ENCODE measurements at regions of chr21 and their contacts with region 1.

Region 1: DNA sequence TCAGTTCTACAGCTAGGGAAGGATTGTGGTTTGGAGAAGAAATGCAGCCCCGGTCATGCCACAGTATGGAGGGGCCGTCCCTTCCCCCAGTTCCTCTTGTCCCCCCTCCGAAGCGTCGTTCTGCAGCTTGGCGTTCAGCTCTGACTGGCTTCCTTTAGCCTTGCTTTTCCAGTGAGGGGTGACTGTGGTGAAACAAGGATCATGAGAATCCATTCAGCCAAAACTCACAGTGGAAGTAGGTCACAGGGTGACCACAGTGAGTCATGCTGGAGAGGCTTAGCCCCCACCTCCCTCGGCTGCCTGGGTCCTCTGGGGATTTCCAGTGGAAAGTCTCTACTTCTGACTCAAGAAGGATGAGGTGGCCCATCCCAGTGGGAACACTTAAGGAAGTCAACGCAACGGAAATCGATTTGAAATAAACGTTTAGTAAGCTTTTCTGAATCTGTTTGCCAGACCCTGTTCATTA is 37.3 kb upstream of the COL6A2 start:
- DNase-seq: peak; percentile 70 to 96
- H3K4me3 ChIP-seq: no peak overlapping the region
- H3K27ac ChIP-seq: peak overlapping the region; percentile 94 to 99
- H3K4me1 ChIP-seq: peaks cover 29 to 45% of the 10 kb centered on the region in 2 donors
- H3K27me3 ChIP-seq: no peaks in the 10 kb centered on the region
- CTCF ChIP-seq: no peak

Region 2: GRCh38 chr21:44742418-44743153 is 1318.0 kb before region 1 on chr21:
- intact Hi-C with region 1: no loop called
- DNase-seq: no peak
- H3K4me3 ChIP-seq: no peak overlapping the region
- H3K27ac ChIP-seq: no peak overlapping the region
- H3K4me1 ChIP-seq: no peaks in the 10 kb centered on the region
- H3K27me3 ChIP-seq: no peaks in the 10 kb centered on the region
- CTCF ChIP-seq: no peak

Region 3: DNA sequence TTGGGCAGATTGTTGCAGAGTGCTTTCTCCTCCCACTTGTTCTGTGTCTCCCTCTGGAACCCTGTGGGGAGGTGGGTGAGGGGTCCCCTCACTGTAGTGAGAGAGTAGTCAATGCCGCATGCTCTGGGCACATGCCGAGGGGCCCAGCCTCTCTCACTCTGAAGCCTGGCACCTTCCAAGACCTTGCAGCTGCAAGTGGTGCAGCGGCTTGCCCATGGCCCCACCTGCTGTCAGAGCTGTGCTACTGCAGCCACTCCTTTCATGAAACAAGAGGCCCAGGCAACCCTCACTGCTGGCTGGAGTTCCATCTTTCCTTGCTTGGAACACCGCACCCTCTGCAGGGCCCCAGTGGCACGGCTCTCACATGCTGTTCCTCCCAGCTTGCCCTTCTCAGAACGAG is 137.5 kb before region 1 on chr21:
- intact Hi-C with region 1: no loop called
- DNase-seq: peak in 1 of 2 donors; percentile 80
- H3K4me3 ChIP-seq: no peak overlapping the region
- H3K27ac ChIP-seq: no peak overlapping the region
- H3K4me1 ChIP-seq: peaks cover 0 to 3% of the 10 kb centered on the region in 2 donors
- H3K27me3 ChIP-seq: no peaks in the 10 kb centered on the region
- CTCF ChIP-seq: peak; percentile 76 to 97 (median 94)

Region 4: DNA sequence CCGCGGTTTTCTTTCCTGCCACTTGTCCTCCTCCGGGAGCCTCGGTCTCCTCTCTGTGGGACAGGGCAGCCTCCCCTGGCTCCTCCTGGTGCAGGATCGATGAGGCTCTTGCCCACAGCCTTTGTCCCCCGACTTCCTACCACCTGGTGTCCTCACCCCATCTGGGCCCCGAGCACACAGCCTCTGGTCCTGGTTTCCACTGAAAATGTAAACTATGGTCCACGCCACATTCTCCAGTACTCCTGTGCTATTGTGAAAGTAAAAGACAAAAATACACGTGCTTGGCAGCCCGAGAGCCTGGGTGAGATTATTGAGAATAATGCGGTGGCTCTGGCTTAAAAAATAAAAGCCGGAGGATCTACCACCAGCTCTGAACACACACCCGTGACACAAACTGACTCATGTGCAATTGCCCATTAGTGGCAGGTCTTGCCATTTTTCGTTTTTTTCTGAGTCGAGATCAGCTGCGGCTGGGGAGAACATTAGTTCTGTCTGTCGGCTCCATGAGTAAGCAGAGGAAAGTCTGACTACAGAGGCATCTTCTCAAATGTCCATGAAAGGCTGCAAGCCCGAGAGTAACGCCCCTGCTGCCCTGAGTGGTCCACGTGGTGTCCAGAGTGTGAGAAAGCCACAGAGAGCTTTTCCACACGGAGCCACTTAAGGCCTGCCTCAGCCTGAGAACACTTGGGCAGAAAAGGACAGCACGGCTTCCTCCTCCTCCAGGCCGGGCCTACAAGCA is 31.6 kb after region 1 on chr21:
- intact Hi-C with region 1: loop called (anchors 1 kb)
- DNase-seq: peak; percentile 87 to 97
- H3K4me3 ChIP-seq: peak overlapping the region in 1 of 2 donors; percentile 52
- H3K27ac ChIP-seq: peak overlapping the region; percentile 98 to 99
- H3K4me1 ChIP-seq: peaks cover 21 to 22% of the 10 kb centered on the region in 2 donors
- H3K27me3 ChIP-seq: no peaks in the 10 kb centered on the region
- CTCF ChIP-seq: no peak

Region 5: GRCh38 chr21:46171996-46172862 is 111.6 kb after region 1 on chr21:
- intact Hi-C with region 1: no loop called
- DNase-seq: peak in 1 of 2 donors; percentile 49
- H3K4me3 ChIP-seq: no peak overlapping the region
- H3K27ac ChIP-seq: no peak overlapping the region
- H3K4me1 ChIP-seq: no peaks in the 10 kb centered on the region
- H3K27me3 ChIP-seq: no peaks in the 10 kb centered on the region
- CTCF ChIP-seq: no peak

Measured in ascending aorta (tissue), 2 donors.